ENCODE measurements at regions of chr17 and their contacts with region 1.

Region 1: DNA sequence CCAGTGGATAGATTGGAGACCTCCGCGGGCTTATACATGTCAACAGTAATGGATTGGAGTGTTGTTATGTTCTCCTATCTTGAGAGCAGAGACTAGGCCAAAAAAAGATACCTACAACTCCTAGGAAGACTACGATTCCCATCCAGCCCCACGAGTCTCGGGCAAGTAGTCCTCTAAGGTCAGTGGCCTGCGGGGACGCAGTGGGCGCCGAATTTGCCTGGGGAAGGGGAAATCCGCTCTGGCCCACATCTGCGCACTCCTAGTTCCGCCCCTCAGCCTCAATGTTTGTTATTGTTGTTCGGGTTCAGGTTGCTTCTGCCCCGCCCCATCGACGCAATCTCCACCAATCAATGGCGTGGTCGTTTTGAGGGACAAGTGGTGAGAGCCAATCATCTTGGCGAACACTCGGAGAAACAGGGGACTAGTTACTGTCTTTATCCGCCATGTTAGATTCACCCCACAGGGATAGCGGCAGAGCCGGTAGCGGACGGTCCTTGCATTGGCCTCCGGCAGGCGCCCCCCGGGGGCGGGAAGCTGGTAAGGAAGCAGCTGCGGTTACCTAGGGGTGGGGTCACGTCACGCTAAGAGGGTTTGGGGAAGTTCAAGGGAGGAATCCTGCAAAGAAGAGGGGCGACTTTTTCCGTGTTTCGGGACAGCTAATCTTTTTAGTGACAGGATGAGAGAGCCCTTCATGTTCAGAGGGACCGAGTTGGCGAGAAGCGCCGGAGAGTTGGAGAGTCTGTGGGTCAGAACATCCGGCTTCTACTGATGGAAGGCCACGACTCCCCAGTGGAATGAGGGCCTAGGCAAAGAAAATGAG is at the start of gene NBR1:
- DNase-seq: peak; percentile 97 to 99 (median 98)
- H3K4me3 ChIP-seq: peak within 1 kb of the TSS; percentile 67 to 97 (median 91)
- H3K4me3 Mint-ChIP-seq: no peak within 1 kb of the TSS
- H3K27ac ChIP-seq: peak within 1 kb of the TSS; percentile 85 to 99
- H3K27ac Mint-ChIP-seq: no peak within 1 kb of the TSS
- H3K4me1 ChIP-seq: peaks cover 33 to 40% of the 10 kb centered on the region in 2 donors
- H3K4me1 Mint-ChIP-seq: peaks cover 18% of the 10 kb centered on the region
- H3K27me3 ChIP-seq: no peaks in the 10 kb centered on the region
- H3K27me3 Mint-ChIP-seq: no peaks in the 10 kb centered on the region
- CTCF ChIP-seq: no peak
- polyA plus RNA-seq, gene NBR1: 40.4 to 88.5 (median 64.0) TPM

Region 2: GRCh38 chr17:42832974-42833766 is 337.8 kb before region 1 on chr17 and contains the start of gene PSME3:
- intact Hi-C with region 1: loop called in 1 of 2 experiments (anchors 5 kb)
- DNase-seq: peak; percentile 86 to 93 (median 90)
- H3K4me3 ChIP-seq: peak within 1 kb of the TSS; percentile 51 to 91 (median 84)
- H3K4me3 Mint-ChIP-seq: peak within 1 kb of the TSS; percentile 95 to 96
- H3K27ac ChIP-seq: peak within 1 kb of the TSS; percentile 82 to 94
- H3K27ac Mint-ChIP-seq: peak within 1 kb of the TSS; percentile 94 to 99 (median 97)
- H3K4me1 ChIP-seq: peaks cover 24 to 32% of the 10 kb centered on the region in 2 donors
- H3K4me1 Mint-ChIP-seq: peaks cover 24% of the 10 kb centered on the region
- H3K27me3 ChIP-seq: no peaks in the 10 kb centered on the region
- H3K27me3 Mint-ChIP-seq: peaks cover 5 to 8% (median 6%) of the 10 kb centered on the region in 3 donors
- CTCF ChIP-seq: no peak
- polyA plus RNA-seq, gene PSME3: 61.9 to 137 (median 124) TPM

Region 3: DNA sequence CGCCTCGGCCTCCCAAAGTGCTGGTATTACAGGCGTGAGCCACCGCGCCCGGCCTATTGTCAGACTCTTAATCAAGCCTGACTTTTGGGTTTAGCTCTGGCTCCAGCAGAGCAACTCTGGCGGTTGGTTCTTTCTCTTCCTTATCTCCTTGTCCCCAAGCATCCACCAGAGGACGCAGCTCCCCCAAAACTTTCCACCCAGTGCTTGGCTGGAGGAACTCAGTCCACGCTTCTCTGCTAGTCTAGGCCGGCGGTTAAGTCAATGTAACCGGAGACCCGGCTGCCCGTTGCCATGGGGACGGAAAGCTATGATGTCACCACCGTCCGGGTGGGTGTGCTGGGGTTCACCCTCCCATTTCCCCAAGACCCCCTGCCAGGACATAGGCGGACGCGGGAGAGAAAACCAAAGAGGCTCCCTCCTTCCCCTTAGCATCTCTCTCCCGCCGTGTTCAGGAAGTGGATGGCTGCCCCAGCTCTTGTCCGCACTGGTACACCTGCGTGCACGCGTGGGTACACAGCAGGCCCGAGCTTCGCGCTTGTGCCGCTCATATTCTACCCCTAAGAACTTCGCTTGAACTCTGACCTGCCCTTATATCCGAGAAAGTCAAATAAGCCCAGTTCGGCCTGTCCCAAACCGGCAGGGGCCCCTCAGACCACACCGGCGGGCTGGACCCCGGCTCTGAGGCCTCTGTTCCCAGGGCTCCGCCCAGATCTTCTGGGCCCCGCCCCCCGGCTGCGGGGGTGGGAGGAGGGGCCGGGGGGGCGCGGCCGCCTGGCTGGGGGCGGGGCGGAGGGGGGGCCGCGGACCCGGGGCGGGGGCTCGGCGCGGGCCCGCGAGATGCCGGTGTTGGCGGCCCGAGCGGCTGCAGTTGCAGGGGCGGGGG is 146.3 kb before region 1 on chr17 and contains the start of gene RND2:
- intact Hi-C with region 1: loop called in 1 of 2 experiments (anchors 10 kb)
- DNase-seq: peak; percentile 72 to 83 (median 80)
- H3K4me3 ChIP-seq: peak within 1 kb of the TSS; percentile 36 to 81 (median 41)
- H3K4me3 Mint-ChIP-seq: peak within 1 kb of the TSS; percentile 83 to 96
- H3K27ac ChIP-seq: peak within 1 kb of the TSS in 1 of 2 donors; percentile 9
- H3K27ac Mint-ChIP-seq: peak within 1 kb of the TSS in 6 of 7 donors; percentile 23 to 79 (median 62)
- H3K4me1 ChIP-seq: peaks cover 35 to 44% of the 10 kb centered on the region in 2 donors
- H3K4me1 Mint-ChIP-seq: peaks cover 38% of the 10 kb centered on the region
- H3K27me3 ChIP-seq: peaks cover 0 to 15% of the 10 kb centered on the region in 2 donors
- H3K27me3 Mint-ChIP-seq: peaks cover 8 to 30% (median 16%) of the 10 kb centered on the region in 3 donors
- CTCF ChIP-seq: peak; percentile 70
- polyA plus RNA-seq, gene RND2: not detected

Region 4: GRCh38 chr17:43125133-43125966 is 45.6 kb before region 1 on chr17 and contains the start of gene BRCA1:
- intact Hi-C with region 1: loop called (anchors 1 to 2 kb)
- DNase-seq: peak; percentile 96 to 99 (median 99)
- H3K4me3 ChIP-seq: peak within 1 kb of the TSS; percentile 76 to 100 (median 78)
- H3K4me3 Mint-ChIP-seq: peak within 1 kb of the TSS; percentile 97 to 99
- H3K27ac ChIP-seq: peak within 1 kb of the TSS; percentile 23 to 90
- H3K27ac Mint-ChIP-seq: peak within 1 kb of the TSS; percentile 95 to 98 (median 96)
- H3K4me1 ChIP-seq: peaks cover 25 to 30% of the 10 kb centered on the region in 2 donors
- H3K4me1 Mint-ChIP-seq: peaks cover 30% of the 10 kb centered on the region
- H3K27me3 ChIP-seq: no peaks in the 10 kb centered on the region
- H3K27me3 Mint-ChIP-seq: peaks cover 0 to 3% (median 0%) of the 10 kb centered on the region in 3 donors
- CTCF ChIP-seq: no peak
- polyA plus RNA-seq, gene BRCA1: 0.87 to 2.6 (median 1.9) TPM

Region 5: GRCh38 chr17:43490621-43491020 is 319.6 kb after region 1 on chr17:
- intact Hi-C with region 1: loop called in 1 of 2 experiments (anchors 10 kb)
- DNase-seq: no peak
- H3K4me3 ChIP-seq: no peak overlapping the region
- H3K4me3 Mint-ChIP-seq: no peak overlapping the region
- H3K27ac ChIP-seq: no peak overlapping the region
- H3K27ac Mint-ChIP-seq: peak overlapping the region in 1 of 7 donors; percentile 58
- H3K4me1 ChIP-seq: peaks cover 2 to 11% of the 10 kb centered on the region in 2 donors
- H3K4me1 Mint-ChIP-seq: peaks cover 14% of the 10 kb centered on the region
- H3K27me3 ChIP-seq: no peaks in the 10 kb centered on the region
- H3K27me3 Mint-ChIP-seq: peaks cover 0 to 1% (median 0%) of the 10 kb centered on the region in 3 donors
- CTCF ChIP-seq: no peak